Endothelial cell of umbilical vein (primary cell): ENCODE measurements at regions of chr6 and their contacts with region 1.

Region 1: GRCh38 chr6:149431905-149432775 is 32.1 kb downstream of the SUMO4 start:
- DNase-seq: peak; percentile 70
- H3K4me3 ChIP-seq: no peak overlapping the region
- H3K27ac ChIP-seq: no peak overlapping the region
- H3K4me1 ChIP-seq: no peaks in the 10 kb centered on the region
- H3K27me3 ChIP-seq: no peaks in the 10 kb centered on the region
- CTCF ChIP-seq: peak; percentile 91
- POLR2A ChIP-seq: no peak

Region 2: GRCh38 chr6:149082286-149082707 is 349.8 kb before region 1 on chr6:
- CTCF ChIA-PET with region 1: interaction called, 204 read pairs
- POLR2A ChIA-PET with region 1: no interaction called
- dilution Hi-C with region 1: no loop called
- intact Hi-C with region 1: loop called (anchors 1 kb)
- DNase-seq: peak; percentile 62
- H3K4me3 ChIP-seq: no peak overlapping the region
- H3K27ac ChIP-seq: no peak overlapping the region
- H3K4me1 ChIP-seq: no peaks in the 10 kb centered on the region
- H3K27me3 ChIP-seq: peaks cover 18 to 25% of the 10 kb centered on the region in 2 experiments
- CTCF ChIP-seq: peak; percentile 74 to 81
- POLR2A ChIP-seq: no peak

Region 3: DNA sequence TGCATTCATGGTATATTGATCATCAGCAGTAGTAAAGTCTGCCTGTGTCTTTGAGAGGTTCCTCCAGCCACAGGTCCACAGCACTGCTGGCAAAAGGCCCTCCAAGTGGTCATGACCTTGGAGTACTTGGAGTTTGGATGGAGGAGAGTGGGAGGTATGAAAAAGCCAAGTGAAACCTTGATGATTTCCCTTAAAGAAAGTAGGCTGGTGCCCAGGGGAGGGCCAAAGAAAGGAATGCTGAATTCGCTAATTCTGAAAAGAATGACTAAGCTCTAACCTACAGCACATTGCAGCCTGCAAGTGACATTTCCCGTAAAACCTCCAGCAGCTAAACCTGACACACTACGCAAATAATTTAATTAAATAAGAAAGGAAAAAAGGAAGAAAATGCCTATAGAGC is 338.0 kb before region 1 on chr6:
- CTCF ChIA-PET with region 1: interaction called, 17 read pairs
- POLR2A ChIA-PET with region 1: no interaction called
- dilution Hi-C with region 1: no loop called
- intact Hi-C with region 1: no loop called
- DNase-seq: no peak
- H3K4me3 ChIP-seq: no peak overlapping the region
- H3K27ac ChIP-seq: no peak overlapping the region
- H3K4me1 ChIP-seq: no peaks in the 10 kb centered on the region
- H3K27me3 ChIP-seq: peaks cover 6 to 13% of the 10 kb centered on the region in 2 experiments
- CTCF ChIP-seq: no peak
- POLR2A ChIP-seq: no peak

Region 4: DNA sequence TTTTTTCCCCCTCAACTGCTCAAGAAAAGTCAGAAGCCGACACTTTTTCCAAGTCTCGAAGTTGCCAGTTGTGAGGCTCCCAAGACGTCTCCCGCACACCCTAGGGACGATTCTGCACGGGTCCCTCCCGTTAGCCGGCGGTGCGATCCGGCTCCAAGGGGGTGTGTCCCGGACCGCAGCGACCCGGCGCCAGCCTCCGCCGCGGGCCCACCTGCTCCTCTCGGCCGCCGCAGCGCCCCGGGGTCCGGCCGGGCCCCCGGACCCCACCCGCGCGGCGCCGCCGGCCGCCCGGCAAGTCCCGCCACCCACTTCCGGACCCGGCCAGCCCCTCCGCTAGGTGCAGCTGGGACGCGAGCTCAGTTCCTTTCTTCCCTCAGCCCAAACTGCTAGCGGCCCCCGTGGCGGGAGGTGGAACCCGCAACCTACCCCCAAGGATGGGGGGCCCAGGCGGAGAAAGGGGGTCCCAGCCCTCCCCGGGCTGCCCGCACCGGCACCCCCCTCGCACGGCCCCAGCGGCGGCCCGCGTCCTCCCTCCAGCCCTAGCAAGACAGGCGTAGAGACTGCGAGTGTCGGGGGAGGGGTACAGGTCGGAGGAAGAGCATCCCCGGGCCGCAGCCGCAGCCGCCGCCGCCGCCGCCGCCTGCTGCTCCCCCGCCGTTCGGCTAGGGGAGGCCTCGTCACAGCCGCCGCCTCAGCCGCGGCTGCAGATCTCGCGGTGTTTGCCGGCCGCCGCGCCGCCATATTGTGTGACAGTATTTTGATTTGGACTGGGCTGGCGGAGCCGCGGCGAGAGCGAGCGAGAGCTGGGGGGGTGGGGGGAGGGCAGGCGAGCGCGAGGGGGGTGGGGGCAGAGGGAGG is 115.1 kb before region 1 on chr6:
- CTCF ChIA-PET with region 1: interaction called, 7 read pairs
- POLR2A ChIA-PET with region 1: no interaction called
- dilution Hi-C with region 1: no loop called
- intact Hi-C with region 1: loop called (anchors 2 kb)
- DNase-seq: peak; percentile 90
- H3K4me3 ChIP-seq: peak overlapping the region; percentile 69 to 97 (median 79)
- H3K27ac ChIP-seq: peak overlapping the region; percentile 92
- H3K4me1 ChIP-seq: peaks cover 18% of the 10 kb centered on the region
- H3K27me3 ChIP-seq: peaks cover 18 to 30% of the 10 kb centered on the region in 2 experiments
- CTCF ChIP-seq: no peak
- POLR2A ChIP-seq: no peak

Region 5: GRCh38 chr6:149335924-149336608 is 96.1 kb before region 1 on chr6:
- CTCF ChIA-PET with region 1: no interaction called
- POLR2A ChIA-PET with region 1: no interaction called
- dilution Hi-C with region 1: no loop called
- intact Hi-C with region 1: no loop called
- DNase-seq: peak; percentile 67
- H3K4me3 ChIP-seq: no peak overlapping the region
- H3K27ac ChIP-seq: peak overlapping the region; percentile 61
- H3K4me1 ChIP-seq: peaks cover 43% of the 10 kb centered on the region
- H3K27me3 ChIP-seq: no peaks in the 10 kb centered on the region
- CTCF ChIP-seq: no peak
- POLR2A ChIP-seq: no peak

Region 6: GRCh38 chr6:149419696-149420404 is 12.3 kb before region 1 on chr6:
- CTCF ChIA-PET with region 1: interaction called, 27 read pairs
- POLR2A ChIA-PET with region 1: no interaction called
- dilution Hi-C with region 1: no loop called
- intact Hi-C with region 1: no loop called
- DNase-seq: no peak
- H3K4me3 ChIP-seq: no peak overlapping the region
- H3K27ac ChIP-seq: no peak overlapping the region
- H3K4me1 ChIP-seq: no peaks in the 10 kb centered on the region
- H3K27me3 ChIP-seq: peaks cover under 1 to 13% of the 10 kb centered on the region in 2 experiments
- CTCF ChIP-seq: no peak
- POLR2A ChIP-seq: no peak

Region 7: GRCh38 chr6:150129616-150130422 is 697.7 kb after region 1 on chr6:
- CTCF ChIA-PET with region 1: no interaction called
- POLR2A ChIA-PET with region 1: no interaction called
- dilution Hi-C with region 1: no loop called
- intact Hi-C with region 1: no loop called
- DNase-seq: no peak
- H3K4me3 ChIP-seq: no peak overlapping the region
- H3K27ac ChIP-seq: no peak overlapping the region
- H3K4me1 ChIP-seq: no peaks in the 10 kb centered on the region
- H3K27me3 ChIP-seq: no peaks in the 10 kb centered on the region
- CTCF ChIP-seq: no peak
- POLR2A ChIP-seq: no peak